HepG2 (cell line): ENCODE measurements at regions of chr16 and their contacts with region 1.

Region 1: GRCh38 chr16:1054660-1055556 is 17.6 kb upstream of the SSTR5 start:
- DNase-seq: peak; percentile 26
- ATAC-seq: peak; percentile 82
- H3K4me3 ChIP-seq: no peak overlapping the region
- H3K27ac ChIP-seq: no peak overlapping the region
- H3K4me1 ChIP-seq: no peaks in the 10 kb centered on the region
- H3K27me3 ChIP-seq: peaks cover 19 to 55% of the 10 kb centered on the region in 2 experiments
- CTCF ChIP-seq: peak; percentile 92
- EP300 ChIP-seq: no peak
- POLR2A ChIP-seq: no peak
- RAD21 ChIP-seq: peak; percentile 90

Region 2: DNA sequence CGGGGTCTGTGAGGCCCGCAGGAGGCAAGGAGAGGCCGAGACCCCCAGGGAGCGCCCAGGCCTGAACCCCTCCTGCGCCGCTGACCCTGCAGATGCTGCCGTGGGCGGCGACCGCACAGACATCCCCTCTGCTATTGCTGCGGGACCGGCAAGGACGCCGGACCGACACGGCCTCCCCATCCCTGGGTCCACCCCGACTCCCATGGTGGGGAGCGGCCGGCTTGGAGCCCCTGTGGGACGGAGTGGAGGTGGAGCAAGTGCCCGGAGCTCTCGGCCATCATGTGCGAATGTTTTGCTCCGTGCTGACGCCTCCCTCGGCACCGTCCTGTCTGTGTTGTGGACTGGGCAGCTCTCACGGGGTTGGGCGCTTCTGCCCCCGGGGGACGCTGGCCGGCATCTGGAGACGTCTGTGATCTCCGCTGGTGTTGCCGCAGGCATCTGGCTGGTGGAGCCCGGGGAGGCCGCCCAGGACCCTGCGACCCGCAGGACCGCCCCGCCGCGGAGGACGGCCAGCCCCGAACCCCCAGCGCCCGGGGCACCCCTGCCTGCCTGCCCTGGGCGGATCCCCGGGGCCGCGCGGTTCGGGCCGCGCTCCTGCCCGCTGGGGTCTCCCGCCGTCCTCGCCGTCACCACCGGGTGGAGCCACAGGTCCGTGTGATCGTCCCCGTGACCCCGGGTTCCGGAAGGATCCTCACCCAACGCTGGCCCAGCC is 241.5 kb before region 1 on chr16:
- CTCF ChIA-PET with region 1: interaction called, 42 read pairs
- POLR2A ChIA-PET with region 1: no interaction called
- in situ Hi-C with region 1: loop called (anchors 5 kb)
- intact Hi-C with region 1: no loop called
- DNase-seq: peak; percentile 12
- ATAC-seq: peak; percentile 87
- H3K4me3 ChIP-seq: no peak overlapping the region
- H3K27ac ChIP-seq: no peak overlapping the region
- H3K4me1 ChIP-seq: no peaks in the 10 kb centered on the region
- H3K27me3 ChIP-seq: peaks cover 26 to 84% of the 10 kb centered on the region in 2 experiments
- CTCF ChIP-seq: peak; percentile 88
- EP300 ChIP-seq: no peak
- POLR2A ChIP-seq: no peak
- RAD21 ChIP-seq: peak; percentile 94

Region 3: DNA sequence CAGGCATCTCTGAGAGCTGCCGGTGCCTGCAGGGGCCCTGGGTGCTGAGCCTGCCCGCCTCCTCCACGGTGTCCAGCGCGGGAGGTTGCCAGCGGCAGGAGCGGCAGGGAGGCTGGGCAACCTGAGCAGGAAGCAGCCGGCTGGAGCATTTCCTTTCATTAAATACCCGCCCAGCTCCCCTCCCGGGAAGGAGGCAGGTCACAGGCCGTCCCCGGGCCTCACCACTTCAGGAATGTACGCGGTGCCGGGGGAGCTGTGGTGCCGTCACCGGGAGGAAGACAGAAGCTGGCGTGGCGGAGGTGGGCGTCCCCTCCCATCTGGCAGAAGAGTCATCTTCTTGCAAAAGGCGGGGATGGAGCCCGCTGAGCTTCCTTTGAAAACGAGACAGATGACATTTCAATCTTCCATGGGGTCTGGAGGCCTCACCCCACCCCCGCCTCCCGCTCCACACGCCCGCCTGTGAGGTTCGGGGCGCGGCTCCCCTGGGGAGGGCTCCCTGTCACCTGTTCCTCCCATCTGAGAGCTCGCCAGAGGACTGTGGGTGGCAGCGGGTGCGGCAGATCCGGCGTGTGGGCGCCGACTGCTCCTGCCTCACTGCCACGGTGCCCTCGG is 57.4 kb before region 1 on chr16:
- CTCF ChIA-PET with region 1: no interaction called
- POLR2A ChIA-PET with region 1: no interaction called
- in situ Hi-C with region 1: no loop called
- intact Hi-C with region 1: no loop called
- DNase-seq: no peak
- ATAC-seq: no peak
- H3K4me3 ChIP-seq: no peak overlapping the region
- H3K27ac ChIP-seq: no peak overlapping the region
- H3K4me1 ChIP-seq: no peaks in the 10 kb centered on the region
- H3K27me3 ChIP-seq: peaks cover 30 to 80% of the 10 kb centered on the region in 2 experiments
- CTCF ChIP-seq: no peak
- EP300 ChIP-seq: no peak
- POLR2A ChIP-seq: no peak
- RAD21 ChIP-seq: no peak